Posterior vena cava (tissue), 2 donors: ENCODE measurements at regions of chr4 and their contacts with region 1.

Region 1: DNA sequence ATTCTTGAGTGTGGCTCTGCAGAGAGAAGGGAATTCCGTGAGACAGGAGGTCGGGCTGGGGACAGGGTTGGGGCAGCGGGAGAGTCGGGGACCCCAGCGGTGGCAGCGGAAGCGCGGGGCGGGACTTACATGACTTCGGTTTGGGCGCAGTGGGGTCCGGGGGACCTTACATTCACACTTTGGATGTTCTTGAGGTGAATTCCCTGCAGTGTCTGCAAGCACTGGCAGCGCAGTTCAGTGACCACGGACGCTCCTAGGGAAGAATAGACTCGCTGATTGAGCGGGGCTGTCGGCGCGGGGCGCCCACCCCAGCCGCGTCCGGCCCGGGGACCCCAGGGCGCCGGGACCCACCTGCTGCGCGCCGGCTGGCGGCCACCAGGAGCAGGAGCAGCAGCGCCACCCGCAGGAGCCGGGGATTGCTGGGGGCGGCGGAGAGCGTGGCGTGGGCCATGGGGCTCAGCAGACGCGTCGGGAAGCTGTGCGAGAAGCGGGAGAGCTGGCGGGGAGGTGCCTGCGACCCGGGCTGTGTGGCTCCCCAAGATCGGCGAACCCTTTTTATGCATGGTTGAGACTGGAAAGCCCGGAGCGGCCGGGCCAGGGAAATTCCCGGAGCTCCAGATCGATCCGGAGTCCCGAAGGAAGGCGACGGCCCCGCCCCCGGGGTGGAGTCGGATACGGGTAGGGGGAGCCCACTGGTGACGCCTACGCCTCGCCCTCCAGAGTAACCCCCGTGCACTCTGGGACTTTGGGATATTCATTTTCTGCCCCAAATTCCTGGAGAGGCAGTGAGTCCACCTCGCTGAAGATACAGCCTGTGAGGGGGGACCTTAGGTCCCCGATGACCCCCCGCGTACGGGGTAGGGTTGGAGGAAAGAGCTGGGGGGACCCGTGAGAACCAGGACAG is at the start of gene CXCL3:
- DNase-seq: peak; percentile 93
- total RNA-seq, gene CXCL3: 1.8 to 3.9 TPM

Region 2: GRCh38 chr4:73631565-73632226 is 406.7 kb before region 1 on chr4:
- intact Hi-C with region 1: no loop called
- DNase-seq: no peak

Region 3: GRCh38 chr4:73788411-73788810 is 250.0 kb before region 1 on chr4:
- intact Hi-C with region 1: loop called in 1 of 2 experiments (anchors 5 kb)
- DNase-seq: no peak